Right ventricle myocardium inferior (tissue), 1 donor: ENCODE measurements at regions of chr21 and their contacts with region 1.

Region 1: DNA sequence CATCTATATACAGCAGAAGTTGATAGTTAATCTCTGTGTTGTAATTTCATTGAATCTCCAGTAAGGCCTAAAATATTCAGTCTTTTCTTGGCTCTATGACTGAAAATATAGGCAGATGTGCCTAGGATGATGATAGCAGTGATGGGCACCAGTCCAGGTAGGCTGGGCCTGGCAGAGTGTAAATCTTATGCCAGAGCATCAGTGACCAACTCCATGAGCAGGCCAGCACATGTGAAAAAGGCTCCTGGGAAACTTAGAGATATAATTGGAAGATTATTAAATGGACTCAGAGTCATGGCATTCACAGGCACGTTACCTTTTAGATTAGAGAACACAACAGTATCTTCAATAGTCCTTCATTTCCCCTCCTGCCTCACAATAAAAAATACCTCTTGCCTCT is 20.7 kb upstream of the CYYR1 start:
- DNase-seq: no peak
- ATAC-seq: no peak

Region 2: DNA sequence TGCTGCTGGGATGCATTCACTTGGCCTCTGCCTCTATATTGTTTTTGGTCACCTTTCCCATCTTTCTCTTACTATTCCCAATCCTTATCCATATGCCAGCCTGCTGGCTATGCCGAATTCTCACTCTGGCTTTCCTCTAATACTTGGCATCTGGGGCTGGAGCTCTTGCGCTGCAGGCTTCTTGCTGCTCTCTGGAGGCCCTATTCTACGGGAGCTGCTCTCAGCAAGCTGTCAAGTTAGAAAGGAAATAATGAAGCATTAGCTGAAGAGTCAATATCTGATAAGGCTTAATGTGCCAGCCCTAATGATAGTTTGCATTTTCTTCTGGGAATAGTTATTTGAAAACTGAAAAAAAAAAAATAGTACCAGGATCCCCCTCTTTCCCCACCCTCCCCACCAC is 104.6 kb after region 1 on chr21:
- intact Hi-C with region 1: loop called (anchors 5 kb)
- DNase-seq: no peak
- ATAC-seq: no peak

Region 3: GRCh38 chr21:27326275-27326674 is 732.5 kb after region 1 on chr21:
- intact Hi-C with region 1: no loop called
- DNase-seq: no peak
- ATAC-seq: no peak